Gastrocnemius medialis (tissue), 4 donors: ENCODE measurements at regions of chr6 and their contacts with region 1.

Region 1: GRCh38 chr6:116328528-116328903 is 42.2 kb upstream of the DSE start:
- DNase-seq: no peak
- ATAC-seq: peak in 1 of 2 donors; percentile 27
- H3K4me3 ChIP-seq: no peak overlapping the region
- H3K27ac ChIP-seq: peak overlapping the region in 3 of 4 donors; percentile 28 to 37 (median 37)
- H3K4me1 ChIP-seq: peaks cover 15 to 17% of the 10 kb centered on the region in 2 donors
- H3K27me3 ChIP-seq: no peaks in the 10 kb centered on the region
- CTCF ChIP-seq: no peak
- POLR2A ChIP-seq: no peak

Region 2: GRCh38 chr6:114564302-114564933 is 1764.1 kb before region 1 on chr6:
- in situ Hi-C with region 1: no loop called
- intact Hi-C with region 1: no loop called
- DNase-seq: no peak
- ATAC-seq: no peak
- H3K4me3 ChIP-seq: no peak overlapping the region
- H3K27ac ChIP-seq: no peak overlapping the region
- H3K4me1 ChIP-seq: no peaks in the 10 kb centered on the region
- H3K27me3 ChIP-seq: no peaks in the 10 kb centered on the region
- CTCF ChIP-seq: no peak
- POLR2A ChIP-seq: no peak

Region 3: GRCh38 chr6:116287689-116288282 is 40.7 kb before region 1 on chr6:
- in situ Hi-C with region 1: no loop called
- intact Hi-C with region 1: loop called (anchors 5 kb)
- DNase-seq: no peak
- ATAC-seq: peak; percentile 79 to 80
- H3K4me3 ChIP-seq: no peak overlapping the region
- H3K27ac ChIP-seq: no peak overlapping the region
- H3K4me1 ChIP-seq: peaks cover 0 to 4% of the 10 kb centered on the region in 2 donors
- H3K27me3 ChIP-seq: no peaks in the 10 kb centered on the region
- CTCF ChIP-seq: peak; percentile 66 to 87 (median 86)
- POLR2A ChIP-seq: no peak